ENCODE measurements at regions of chr17 and their contacts with region 1.

Region 1: DNA sequence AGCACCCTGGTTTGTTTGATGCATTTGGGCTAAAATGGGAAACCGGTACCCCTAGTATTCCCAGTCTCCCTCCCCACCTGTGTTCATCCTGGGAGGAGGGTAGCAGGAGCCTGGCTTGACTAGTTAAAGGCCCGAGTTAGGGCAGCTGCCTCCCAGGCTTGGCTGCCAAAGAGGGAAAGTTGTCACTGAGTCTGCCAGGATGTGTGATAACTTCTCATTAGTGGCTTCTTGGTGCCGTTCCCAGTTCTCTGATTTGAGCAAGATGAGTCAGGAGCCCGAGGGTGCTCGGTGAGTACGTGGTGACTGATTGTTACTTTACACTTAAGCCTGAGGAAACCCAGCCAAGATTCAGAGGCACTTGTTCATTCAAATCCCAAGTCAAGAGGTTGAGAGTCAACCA is 2.5 kb downstream of the KRT32 start:
- DNase-seq: peak; percentile 37 to 83
- ATAC-seq: peak; percentile 88 to 99 (median 96)
- H3K4me3 ChIP-seq: no peak overlapping the region
- H3K27ac ChIP-seq: no peak overlapping the region
- H3K4me1 ChIP-seq: peaks cover 0 to 12% (median 4%) of the 10 kb centered on the region in 9 donors
- H3K27me3 ChIP-seq: peaks cover 0 to 17% (median 0%) of the 10 kb centered on the region in 7 donors
- CTCF ChIP-seq: no peak

Region 2: GRCh38 chr17:41301916-41302901 is 162.5 kb before region 1 on chr17 and contains the start of gene KRTAP29-1:
- intact Hi-C with region 1: loop called in 1 of 10 experiments (anchors 1 kb)
- DNase-seq: peak; percentile 51 to 78
- ATAC-seq: peak; percentile 87 to 98 (median 95)
- H3K4me3 ChIP-seq: no peak within 1 kb of the TSS
- H3K27ac ChIP-seq: peak within 1 kb of the TSS in 3 of 10 donors; percentile 5 to 39 (median 26)
- H3K4me1 ChIP-seq: peaks cover 0 to 10% (median 4%) of the 10 kb centered on the region in 9 donors
- H3K27me3 ChIP-seq: peaks cover 0 to 13% (median 0%) of the 10 kb centered on the region in 7 donors
- CTCF ChIP-seq: no peak
- total RNA-seq, gene KRTAP29-1: not detected

Measured in heart right ventricle (tissue), 16 donors.